A673 (cell line): ENCODE measurements at regions of chr1 and their contacts with region 1.

Region 1: GRCh38 chr1:209354111-209354839 is 229.2 kb upstream of the CAMK1G start:
- DNase-seq: peak; percentile 86
- H3K4me3 ChIP-seq: no peak overlapping the region
- H3K27ac ChIP-seq: no peak overlapping the region
- H3K4me1 ChIP-seq: no peaks in the 10 kb centered on the region
- H3K27me3 ChIP-seq: no peaks in the 10 kb centered on the region
- CTCF ChIP-seq: peak; percentile 92

Region 2: DNA sequence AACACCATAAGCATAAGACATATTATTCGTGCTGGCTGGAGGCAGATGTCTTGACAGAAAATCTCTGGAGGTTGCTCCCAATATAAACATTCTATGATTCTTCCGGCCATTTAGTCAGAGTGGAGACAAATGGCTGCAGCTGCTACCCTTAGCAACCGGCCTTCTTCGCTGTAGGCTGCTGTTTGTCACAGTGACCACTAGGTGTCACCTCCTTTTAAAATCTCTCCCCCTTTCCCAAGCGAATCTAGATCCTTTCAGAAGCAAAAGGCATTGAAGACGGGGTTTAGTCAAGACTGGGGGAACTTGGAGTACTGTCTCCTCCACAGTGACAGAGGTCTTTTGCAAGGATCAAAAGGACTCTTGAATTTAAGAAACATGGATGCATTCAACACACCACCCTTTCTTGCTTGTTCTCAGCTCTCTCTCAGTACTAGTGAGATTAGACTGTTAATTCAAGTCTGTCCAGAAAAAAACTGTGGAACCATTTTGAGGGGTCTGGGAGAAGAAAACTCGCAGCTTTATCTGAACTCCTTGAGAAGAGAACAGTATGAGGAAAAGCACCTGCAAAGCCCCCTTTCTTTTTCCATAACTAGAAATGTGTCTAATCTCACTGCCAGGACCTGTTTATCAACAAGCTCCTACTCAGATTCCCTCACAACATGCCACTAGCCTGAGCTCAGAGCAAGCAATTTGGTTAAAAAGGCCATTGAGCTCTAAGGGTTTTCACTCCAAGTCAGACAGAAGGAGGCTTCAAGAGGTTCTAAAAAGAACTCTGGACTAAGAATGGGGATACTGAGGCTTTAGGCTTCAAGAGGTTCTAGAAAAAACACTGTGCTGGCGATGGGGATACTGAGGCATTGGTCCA is 701.7 kb before region 1 on chr1:
- CTCF ChIA-PET with region 1: no interaction called
- POLR2A ChIA-PET with region 1: no interaction called
- intact Hi-C with region 1: loop called (anchors 5 kb)
- DNase-seq: peak; percentile 74
- H3K4me3 ChIP-seq: no peak overlapping the region
- H3K27ac ChIP-seq: no peak overlapping the region
- H3K4me1 ChIP-seq: no peaks in the 10 kb centered on the region
- H3K27me3 ChIP-seq: peaks cover 4% of the 10 kb centered on the region
- CTCF ChIP-seq: peak; percentile 84

Region 3: DNA sequence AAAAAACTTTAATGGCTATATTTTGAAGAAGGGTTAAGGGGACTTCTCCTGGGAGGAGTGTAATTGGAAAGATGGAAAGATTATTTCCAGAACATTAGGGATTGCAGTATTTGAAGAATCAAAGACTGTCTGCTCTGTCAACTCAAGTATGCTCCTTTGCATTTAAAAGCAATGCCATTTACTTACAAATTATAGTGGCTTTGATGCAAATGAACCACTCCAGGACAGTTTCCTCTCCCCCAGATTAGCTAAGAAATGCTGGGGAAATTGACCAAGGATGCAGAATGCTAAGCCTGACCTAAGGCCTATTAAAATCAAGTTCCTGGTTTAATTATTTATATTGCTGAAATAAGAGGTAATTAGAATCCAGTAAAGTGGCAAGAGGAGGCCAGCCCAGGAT is 118.8 kb after region 1 on chr1:
- CTCF ChIA-PET with region 1: no interaction called
- POLR2A ChIA-PET with region 1: no interaction called
- intact Hi-C with region 1: no loop called
- DNase-seq: no peak
- H3K4me3 ChIP-seq: no peak overlapping the region
- H3K27ac ChIP-seq: no peak overlapping the region
- H3K4me1 ChIP-seq: no peaks in the 10 kb centered on the region
- H3K27me3 ChIP-seq: no peaks in the 10 kb centered on the region
- CTCF ChIP-seq: no peak